KBM-7 (cell line): ENCODE measurements at regions of chr11 and their contacts with region 1.

Region 1: DNA sequence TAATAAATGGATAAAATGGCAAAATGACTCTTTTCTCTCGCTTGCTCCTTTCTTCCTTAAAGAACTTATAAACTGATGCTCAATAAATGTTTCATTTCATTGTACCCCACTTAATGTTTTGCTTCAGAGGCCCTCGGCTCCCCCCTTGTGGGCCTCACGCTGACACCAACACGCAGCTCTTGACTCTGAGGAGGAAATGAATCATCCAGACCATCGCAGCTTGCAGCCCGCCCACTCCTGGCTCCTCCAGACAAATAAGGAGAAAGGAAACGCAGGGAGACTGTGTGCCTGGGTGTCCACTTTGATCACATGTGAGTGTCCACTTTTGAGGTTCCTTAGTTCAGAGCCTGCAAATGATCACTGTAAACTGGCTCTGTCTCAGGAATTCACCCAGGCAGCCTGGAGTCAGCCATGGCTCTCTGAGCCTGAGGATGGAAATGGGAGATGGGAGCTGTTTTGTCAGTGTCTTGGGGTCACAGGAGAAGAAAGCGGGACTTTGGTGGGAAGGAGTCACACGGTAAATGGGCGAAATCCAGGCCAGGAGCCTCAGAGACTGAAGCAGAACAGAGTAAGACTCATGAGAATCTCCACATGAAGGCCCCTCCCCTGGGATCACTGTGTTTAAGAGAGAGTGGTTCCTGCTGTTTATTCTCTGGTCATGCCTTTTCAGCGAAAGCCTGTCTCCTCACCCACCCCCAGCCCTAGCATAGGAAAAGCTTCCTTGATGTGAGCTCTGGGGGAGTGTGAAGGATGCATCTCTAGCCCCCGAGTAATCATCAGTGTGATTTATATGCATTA is 96.5 kb downstream of the CWC15 start:
- DNase-seq: peak; percentile 70

Region 2: DNA sequence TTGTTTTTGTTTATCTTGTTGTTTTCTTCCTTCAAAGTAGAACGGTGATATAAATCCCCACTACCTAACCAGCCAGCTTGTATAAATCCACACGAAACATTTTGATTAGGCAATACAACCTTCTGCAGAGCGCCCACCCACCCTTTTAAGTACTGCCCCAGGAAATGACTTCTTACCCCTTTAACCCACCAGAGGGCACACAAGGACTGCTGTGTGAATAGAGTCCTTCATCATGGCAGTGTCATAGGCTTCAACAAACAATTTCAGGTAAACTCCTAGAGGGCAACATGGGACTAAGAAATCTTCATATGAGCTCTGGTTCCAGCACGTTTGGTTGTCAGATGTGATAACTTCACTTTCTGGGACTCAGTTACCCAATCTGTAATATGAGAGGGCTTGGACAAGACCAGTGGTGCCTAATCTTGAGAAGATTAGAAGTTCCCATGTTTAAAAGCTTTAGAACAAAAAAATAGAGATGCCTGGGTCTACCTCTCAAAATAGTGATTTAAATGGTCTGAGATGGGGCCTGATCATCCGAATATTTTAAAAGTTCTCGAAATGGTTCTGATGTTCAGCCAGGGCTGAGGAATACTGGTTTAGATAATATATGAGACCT is 253.6 kb before region 1 on chr11:
- in situ Hi-C with region 1: loop called (anchors 25 kb)
- DNase-seq: peak; percentile 89

Region 3: GRCh38 chr11:94938095-94939055 is 61.5 kb after region 1 on chr11:
- in situ Hi-C with region 1: no loop called
- DNase-seq: no peak